ENCODE measurements at regions of chr3 and their contacts with region 1.

Region 1: GRCh38 chr3:179562591-179563270 is at the start of gene ACTL6A:
- DNase-seq: peak; percentile 99
- ATAC-seq: peak; percentile 92
- H3K4me3 Mint-ChIP-seq: peak within 1 kb of the TSS; percentile 83
- H3K27ac Mint-ChIP-seq: peak within 1 kb of the TSS; percentile 96
- H3K4me1 Mint-ChIP-seq: peaks cover 26% of the 10 kb centered on the region
- H3K27me3 Mint-ChIP-seq: peaks cover 6% of the 10 kb centered on the region
- total RNA-seq, gene ACTL6A: 85.3 to 113 TPM

Region 2: DNA sequence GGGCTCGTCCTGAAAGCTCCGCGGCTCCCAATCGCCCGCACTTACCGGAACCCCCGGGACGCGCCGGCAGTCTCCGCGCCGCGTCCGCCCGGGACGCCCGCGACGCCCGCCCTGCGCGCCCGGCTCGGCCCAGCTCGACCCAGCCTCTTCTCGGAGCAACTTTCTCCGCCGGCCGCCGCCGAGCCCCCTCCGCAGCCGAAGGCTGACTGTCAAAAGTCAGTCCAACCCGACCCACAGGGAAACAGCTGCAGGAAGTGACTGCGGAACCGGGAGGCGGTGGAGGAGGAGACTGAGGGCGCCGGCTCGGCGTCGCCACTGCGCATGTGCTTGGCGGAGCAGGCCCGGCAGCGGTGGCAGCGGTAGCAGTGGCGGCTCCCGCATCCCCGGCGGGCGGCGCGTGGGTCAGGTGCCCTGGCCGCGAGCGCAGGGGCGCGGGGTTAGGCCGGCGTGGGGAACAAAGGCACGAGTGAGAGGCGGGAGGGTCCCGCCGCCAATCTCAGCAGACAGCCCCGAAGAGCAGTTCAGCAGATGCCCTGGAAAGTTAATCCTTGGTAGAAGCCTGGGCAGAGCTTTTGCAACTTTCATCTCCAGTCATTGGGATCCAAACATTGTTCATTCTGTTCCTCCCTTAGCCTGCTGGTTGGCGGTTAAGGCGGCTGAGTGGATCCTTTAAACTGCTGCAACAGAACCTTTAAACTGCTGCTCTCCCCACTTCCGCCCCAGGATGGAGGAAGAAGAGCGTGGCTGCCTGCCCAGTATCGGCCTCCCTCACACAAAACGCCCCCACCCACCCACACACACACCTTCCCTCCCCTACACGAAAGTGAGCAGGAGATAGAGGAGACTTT is 491.0 kb before region 1 on chr3 and contains the start of gene ZMAT3:
- CTCF ChIA-PET with region 1: interaction called, 3 read pairs
- POLR2A ChIA-PET with region 1: no interaction called
- intact Hi-C with region 1: loop called in 1 of 2 experiments (anchors 2 kb)
- DNase-seq: peak; percentile 90
- ATAC-seq: peak; percentile 86
- H3K4me3 Mint-ChIP-seq: peak within 1 kb of the TSS; percentile 95
- H3K27ac Mint-ChIP-seq: peak within 1 kb of the TSS; percentile 92
- H3K4me1 Mint-ChIP-seq: peaks cover 41% of the 10 kb centered on the region
- H3K27me3 Mint-ChIP-seq: no peaks in the 10 kb centered on the region
- total RNA-seq, gene ZMAT3: 9.5 to 9.9 TPM

Region 3: GRCh38 chr3:179322286-179323196 is 240.2 kb before region 1 on chr3 and contains the start of gene ZNF639:
- CTCF ChIA-PET with region 1: interaction called, 5 read pairs
- POLR2A ChIA-PET with region 1: interaction called, 6 read pairs
- intact Hi-C with region 1: loop called (anchors 1 kb)
- DNase-seq: peak; percentile 91
- ATAC-seq: peak; percentile 78
- H3K4me3 Mint-ChIP-seq: peak within 1 kb of the TSS; percentile 87
- H3K27ac Mint-ChIP-seq: peak within 1 kb of the TSS; percentile 93
- H3K4me1 Mint-ChIP-seq: peaks cover 28% of the 10 kb centered on the region
- H3K27me3 Mint-ChIP-seq: no peaks in the 10 kb centered on the region
- total RNA-seq, gene ZNF639: 31.0 to 39.6 TPM

Region 4: DNA sequence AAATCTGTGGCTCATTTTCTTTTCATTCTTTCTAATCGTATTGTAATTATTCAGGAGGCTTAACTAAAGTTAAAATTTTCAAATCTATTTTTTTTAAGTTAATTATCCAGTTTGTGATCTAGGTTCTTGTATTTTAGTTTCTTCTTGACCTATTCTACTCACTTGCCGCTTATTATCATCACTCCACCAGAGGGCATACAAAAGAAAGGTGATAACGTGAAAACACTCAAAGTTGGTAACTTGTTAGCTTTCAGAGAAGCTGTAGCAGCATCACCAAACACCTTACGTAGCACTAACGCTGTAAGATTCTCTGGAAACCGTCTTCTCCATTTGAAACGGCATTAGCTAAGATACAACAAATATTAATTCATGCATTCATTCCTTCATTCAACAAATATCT is 116.2 kb before region 1 on chr3:
- CTCF ChIA-PET with region 1: interaction called, 3 read pairs
- POLR2A ChIA-PET with region 1: no interaction called
- intact Hi-C with region 1: loop called (anchors 1 to 2 kb)
- DNase-seq: no peak
- ATAC-seq: no peak
- H3K4me3 Mint-ChIP-seq: no peak overlapping the region
- H3K27ac Mint-ChIP-seq: no peak overlapping the region
- H3K4me1 Mint-ChIP-seq: peaks cover 12% of the 10 kb centered on the region
- H3K27me3 Mint-ChIP-seq: peaks cover 40% of the 10 kb centered on the region

Region 5: GRCh38 chr3:179653096-179653797 is 90.5 kb after region 1 on chr3:
- CTCF ChIA-PET with region 1: interaction called, 3 read pairs
- POLR2A ChIA-PET with region 1: no interaction called
- intact Hi-C with region 1: loop called in 1 of 2 experiments (anchors 2 kb)
- DNase-seq: peak; percentile 81
- ATAC-seq: peak; percentile 69
- H3K4me3 Mint-ChIP-seq: peak overlapping the region; percentile 81
- H3K27ac Mint-ChIP-seq: peak overlapping the region; percentile 82
- H3K4me1 Mint-ChIP-seq: peaks cover 22% of the 10 kb centered on the region
- H3K27me3 Mint-ChIP-seq: peaks cover 7% of the 10 kb centered on the region

Region 6: DNA sequence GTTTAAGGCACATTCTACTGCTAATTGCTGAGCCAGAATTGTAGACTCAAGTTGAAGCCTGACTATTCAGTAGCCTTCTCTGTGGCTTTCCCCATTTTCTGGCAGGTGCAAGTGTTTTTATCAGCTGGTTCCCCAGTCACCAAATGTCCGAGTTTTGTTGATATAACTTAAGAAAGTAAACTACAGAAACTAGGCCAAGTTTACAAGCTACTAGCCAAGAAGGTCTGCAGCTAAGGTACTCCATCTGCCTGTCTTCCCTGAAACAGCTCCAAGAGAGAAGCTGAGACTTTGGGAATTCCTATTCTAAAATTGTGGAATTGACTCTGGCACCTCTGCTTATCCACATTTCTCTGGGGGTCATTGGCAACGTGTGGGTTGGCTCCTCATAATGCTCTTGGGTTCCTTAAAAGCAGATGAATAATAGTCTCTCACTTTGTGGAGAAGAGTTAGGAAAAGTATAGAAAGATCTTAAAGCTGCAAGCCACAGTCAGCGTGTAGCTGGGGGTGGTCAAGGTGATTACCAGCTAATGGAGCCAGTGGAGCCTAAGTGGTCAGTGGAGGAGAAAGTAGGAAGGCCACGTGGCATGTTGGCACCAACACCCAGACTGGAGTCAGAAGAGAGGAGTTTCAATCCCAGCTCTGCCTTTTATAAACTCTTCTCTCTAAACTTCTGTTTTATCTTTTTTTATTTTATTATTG is 345.2 kb after region 1 on chr3:
- CTCF ChIA-PET with region 1: no interaction called
- POLR2A ChIA-PET with region 1: no interaction called
- intact Hi-C with region 1: no loop called
- DNase-seq: no peak
- ATAC-seq: no peak
- H3K4me3 Mint-ChIP-seq: no peak overlapping the region
- H3K27ac Mint-ChIP-seq: no peak overlapping the region
- H3K4me1 Mint-ChIP-seq: no peaks in the 10 kb centered on the region
- H3K27me3 Mint-ChIP-seq: peaks cover 6% of the 10 kb centered on the region

Region 7: DNA sequence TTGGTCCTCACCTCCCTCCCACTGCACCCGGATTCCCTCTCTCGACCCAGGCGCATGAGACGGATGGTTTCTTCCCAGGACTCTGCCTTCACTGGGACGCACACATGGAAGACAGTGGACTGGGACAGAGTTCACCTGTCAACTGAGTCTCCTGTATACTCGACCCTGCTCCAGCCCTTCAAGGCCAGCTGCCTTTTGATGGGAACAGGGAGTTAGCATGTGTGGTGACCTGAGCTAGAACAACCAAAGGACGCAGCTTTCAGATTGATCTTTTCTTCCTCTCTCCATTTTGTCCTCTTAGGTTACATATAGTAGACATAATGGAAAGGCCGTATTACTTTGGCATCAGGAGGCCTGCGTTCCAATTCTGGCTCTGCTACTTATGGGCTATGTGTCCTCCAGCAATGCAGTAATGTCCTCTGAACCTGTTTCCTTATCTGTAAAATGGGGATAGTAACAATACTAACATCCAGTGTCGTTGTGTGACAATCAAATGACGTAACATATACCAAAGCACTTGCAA is 379.9 kb after region 1 on chr3:
- CTCF ChIA-PET with region 1: no interaction called
- POLR2A ChIA-PET with region 1: no interaction called
- intact Hi-C with region 1: no loop called
- DNase-seq: no peak
- ATAC-seq: no peak
- H3K4me3 Mint-ChIP-seq: no peak overlapping the region
- H3K27ac Mint-ChIP-seq: no peak overlapping the region
- H3K4me1 Mint-ChIP-seq: peaks cover 3% of the 10 kb centered on the region
- H3K27me3 Mint-ChIP-seq: peaks cover 15% of the 10 kb centered on the region